GM10248 (cell line): ENCODE measurements at regions of chr17 and their contacts with region 1.

Region 1: GRCh38 chr17:28726226-28727130 is at the start of gene TLCD1:
- DNase-seq: peak; percentile 82
- CTCF ChIP-seq: peak; percentile 97

Region 2: GRCh38 chr17:28737859-28738679 is 11.6 kb after region 1 on chr17:
- CTCF ChIA-PET with region 1: interaction called, 472 read pairs
- POLR2A ChIA-PET with region 1: interaction called, 64 read pairs
- DNase-seq: peak; percentile 86
- CTCF ChIP-seq: no peak

Region 3: DNA sequence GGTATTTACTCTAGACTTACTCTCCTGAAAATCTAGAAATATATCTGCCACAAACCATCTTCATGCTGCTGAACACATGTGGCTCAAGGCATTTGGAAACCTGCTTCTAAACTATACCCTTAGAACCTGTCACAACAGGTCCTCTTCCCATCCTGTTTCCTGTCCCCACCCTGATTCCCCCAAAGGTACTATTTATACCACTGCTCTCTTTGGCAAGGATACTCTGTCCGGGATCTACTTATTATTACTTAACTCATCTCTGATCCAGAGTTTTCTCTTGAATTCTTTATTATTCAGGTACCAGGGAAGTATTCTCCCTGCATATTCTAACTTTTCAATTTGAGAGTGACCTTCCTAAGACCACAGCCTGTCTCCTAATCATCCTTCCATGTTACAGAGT is 50.7 kb after region 1 on chr17:
- CTCF ChIA-PET with region 1: interaction called, 12 read pairs
- POLR2A ChIA-PET with region 1: interaction called, 4 read pairs
- DNase-seq: no peak
- CTCF ChIP-seq: no peak

Region 4: DNA sequence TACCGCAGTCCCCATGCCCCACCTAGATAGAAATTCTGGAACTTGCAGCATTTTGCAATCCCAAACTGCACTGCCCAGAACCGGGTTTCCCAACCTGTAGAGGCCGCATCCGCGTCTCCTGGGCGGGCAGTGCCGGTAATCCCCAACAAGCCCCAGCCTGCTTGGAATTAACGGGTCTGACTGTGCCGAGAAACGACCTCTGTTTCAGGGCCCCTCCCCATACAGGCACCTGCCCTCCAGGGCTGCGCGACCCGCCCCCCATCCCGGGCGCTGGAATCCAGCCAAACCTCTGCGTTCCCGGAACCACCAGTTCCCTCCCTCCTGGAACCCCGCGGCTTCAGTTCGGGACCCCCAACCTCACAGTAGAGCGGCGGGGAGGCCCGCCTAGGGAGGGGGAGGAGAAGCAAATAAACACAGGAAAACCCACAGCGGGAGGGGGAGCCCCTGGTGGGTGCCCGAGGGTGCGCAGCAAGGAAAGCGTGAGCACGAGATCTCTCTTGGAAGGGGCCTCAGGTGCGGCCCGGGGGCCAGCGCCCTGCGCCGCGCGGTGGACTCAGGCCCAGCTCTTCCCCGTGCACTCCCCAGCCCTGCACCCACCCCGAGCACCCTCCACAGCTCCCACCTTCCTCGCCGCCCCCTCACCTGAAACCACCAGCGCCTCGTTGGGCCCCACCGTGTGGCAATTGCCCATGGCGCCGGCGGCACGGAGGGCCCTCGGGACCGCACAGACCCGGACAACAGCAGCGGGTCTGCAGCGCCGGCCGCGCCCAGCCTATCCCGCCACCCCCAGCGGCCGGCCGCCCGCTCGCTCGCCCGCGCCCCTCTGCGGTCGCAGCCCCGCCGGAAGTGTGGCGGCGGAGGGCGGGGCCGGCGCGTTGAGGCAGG is 170.6 kb after region 1 on chr17 and contains the start of gene FLOT2:
- CTCF ChIA-PET with region 1: interaction called, 37 read pairs
- POLR2A ChIA-PET with region 1: interaction called, 7 read pairs
- DNase-seq: peak; percentile 56
- CTCF ChIP-seq: no peak

Region 5: DNA sequence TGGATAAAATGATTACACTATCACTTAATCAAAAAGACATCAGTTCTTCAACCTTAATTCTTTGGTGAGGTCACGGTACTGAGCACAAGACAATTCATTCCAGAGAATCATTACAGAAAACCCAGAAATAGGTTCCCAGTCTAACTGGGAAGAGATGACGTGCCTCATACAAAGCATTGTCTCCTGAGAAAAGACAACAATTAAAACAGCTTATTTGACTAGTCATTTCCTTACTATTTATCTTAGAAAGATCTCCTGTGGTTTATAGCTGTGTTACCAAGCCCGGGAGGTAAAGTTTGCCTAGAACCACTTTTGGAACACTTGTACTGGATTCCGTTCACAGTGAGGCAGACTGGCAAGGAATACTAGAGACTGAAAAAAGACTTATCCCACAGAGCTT is 219.8 kb after region 1 on chr17:
- CTCF ChIA-PET with region 1: interaction called, 39 read pairs
- POLR2A ChIA-PET with region 1: interaction called, 20 read pairs
- DNase-seq: no peak
- CTCF ChIP-seq: no peak

Region 6: GRCh38 chr17:29148790-29149430 is 422.4 kb after region 1 on chr17:
- CTCF ChIA-PET with region 1: no interaction called
- POLR2A ChIA-PET with region 1: interaction called, 13 read pairs
- DNase-seq: peak; percentile 94
- CTCF ChIP-seq: peak; percentile 94